ENCODE measurements at regions of chr17 and their contacts with region 1.

Region 1: DNA sequence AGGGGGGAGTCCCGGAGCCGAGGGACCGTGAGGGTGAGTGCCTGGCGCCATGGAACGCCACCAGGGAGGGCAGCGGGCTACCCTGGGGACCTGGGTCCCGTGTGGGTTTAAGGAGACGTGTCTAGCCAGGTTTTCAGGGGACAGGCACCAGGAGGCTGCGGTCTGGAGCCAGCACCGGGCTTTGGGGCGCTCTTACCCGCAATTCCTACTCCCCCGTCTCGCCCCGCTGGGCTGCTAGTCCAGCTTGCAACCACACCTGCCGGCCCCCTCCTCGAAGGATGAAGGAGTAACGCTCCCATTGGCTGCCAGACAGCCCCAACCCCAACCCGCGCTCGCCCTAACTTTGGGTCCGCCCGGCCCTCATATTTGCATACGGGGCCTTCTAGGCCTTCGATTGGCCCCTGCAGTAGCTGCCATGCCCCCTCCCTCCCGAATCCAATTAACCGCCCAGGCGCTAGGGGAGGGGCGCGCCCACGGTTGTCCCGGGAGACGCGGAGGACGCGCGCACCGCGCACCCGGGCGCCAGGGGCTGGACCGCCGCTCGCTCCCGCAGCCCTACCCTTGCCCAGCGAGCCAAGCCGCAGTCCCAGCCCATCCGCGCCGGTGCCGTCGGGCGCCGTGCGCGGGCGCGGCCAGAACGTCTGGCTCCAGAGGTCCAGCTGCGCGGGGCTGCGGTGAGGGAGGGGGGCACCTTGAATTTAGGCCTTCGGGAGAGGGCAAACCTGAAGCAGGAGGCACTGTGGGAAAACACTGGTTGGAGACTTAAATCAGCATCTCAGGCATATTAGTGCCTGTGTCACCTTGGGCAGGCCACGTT is at the start of gene TTLL6:
- DNase-seq: peak; percentile 67 to 85 (median 75)
- H3K4me3 ChIP-seq: peak within 1 kb of the TSS; percentile 69
- H3K4me3 Mint-ChIP-seq: peak within 1 kb of the TSS; percentile 29 to 89 (median 76)
- H3K27ac ChIP-seq: no peak within 1 kb of the TSS
- H3K27ac Mint-ChIP-seq: peak within 1 kb of the TSS in 3 of 8 donors; percentile 63 to 90 (median 68)
- H3K4me1 ChIP-seq: peaks cover 13% of the 10 kb centered on the region
- H3K4me1 Mint-ChIP-seq: peaks cover 13 to 24% (median 14%) of the 10 kb centered on the region in 3 donors
- H3K27me3 ChIP-seq: peaks cover 20% of the 10 kb centered on the region
- H3K27me3 Mint-ChIP-seq: peaks cover 30 to 60% of the 10 kb centered on the region in 2 donors
- total RNA-seq, gene TTLL6: not detected

Region 2: GRCh38 chr17:48678141-48678971 is 138.6 kb before region 1 on chr17:
- CTCF ChIA-PET with region 1: interaction called, 20 read pairs
- POLR2A ChIA-PET with region 1: no interaction called
- DNase-seq: peak; percentile 55 to 70 (median 63)
- H3K4me3 ChIP-seq: no peak overlapping the region
- H3K4me3 Mint-ChIP-seq: peak overlapping the region in 4 of 7 donors; percentile 20 to 56 (median 46)
- H3K27ac ChIP-seq: no peak overlapping the region
- H3K27ac Mint-ChIP-seq: peak overlapping the region in 1 of 8 donors; percentile 10
- H3K4me1 ChIP-seq: peaks cover 3% of the 10 kb centered on the region
- H3K4me1 Mint-ChIP-seq: peaks cover 0 to 7% (median 0%) of the 10 kb centered on the region in 3 donors
- H3K27me3 ChIP-seq: peaks cover 9% of the 10 kb centered on the region
- H3K27me3 Mint-ChIP-seq: peaks cover 30 to 45% of the 10 kb centered on the region in 2 donors

Region 3: GRCh38 chr17:48729335-48730239 is 87.4 kb before region 1 on chr17:
- CTCF ChIA-PET with region 1: no interaction called
- POLR2A ChIA-PET with region 1: no interaction called
- DNase-seq: no peak
- H3K4me3 ChIP-seq: no peak overlapping the region
- H3K4me3 Mint-ChIP-seq: peak overlapping the region in 4 of 7 donors; percentile 1 to 45 (median 18)
- H3K27ac ChIP-seq: no peak overlapping the region
- H3K27ac Mint-ChIP-seq: peak overlapping the region in 1 of 8 donors; percentile 76
- H3K4me1 ChIP-seq: peaks cover 20% of the 10 kb centered on the region
- H3K4me1 Mint-ChIP-seq: peaks cover 36 to 54% (median 37%) of the 10 kb centered on the region in 3 donors
- H3K27me3 ChIP-seq: peaks cover 96% of the 10 kb centered on the region
- H3K27me3 Mint-ChIP-seq: peaks cover 86 to 94% of the 10 kb centered on the region in 2 donors

Region 4: GRCh38 chr17:48791128-48792032 is 25.6 kb before region 1 on chr17:
- CTCF ChIA-PET with region 1: no interaction called
- POLR2A ChIA-PET with region 1: no interaction called
- DNase-seq: peak in 1 of 5 donors; percentile 17
- H3K4me3 ChIP-seq: no peak overlapping the region
- H3K4me3 Mint-ChIP-seq: no peak overlapping the region
- H3K27ac ChIP-seq: no peak overlapping the region
- H3K27ac Mint-ChIP-seq: no peak overlapping the region
- H3K4me1 ChIP-seq: no peaks in the 10 kb centered on the region
- H3K4me1 Mint-ChIP-seq: peaks cover 0 to 7% (median 0%) of the 10 kb centered on the region in 3 donors
- H3K27me3 ChIP-seq: peaks cover 3% of the 10 kb centered on the region
- H3K27me3 Mint-ChIP-seq: peaks cover 22 to 61% of the 10 kb centered on the region in 2 donors

Region 5: GRCh38 chr17:48804925-48805411 is 12.0 kb before region 1 on chr17:
- CTCF ChIA-PET with region 1: interaction called, 21 read pairs
- POLR2A ChIA-PET with region 1: no interaction called
- DNase-seq: peak; percentile 45 to 67 (median 57)
- H3K4me3 ChIP-seq: no peak overlapping the region
- H3K4me3 Mint-ChIP-seq: peak overlapping the region in 1 of 7 donors; percentile 55
- H3K27ac ChIP-seq: no peak overlapping the region
- H3K27ac Mint-ChIP-seq: no peak overlapping the region
- H3K4me1 ChIP-seq: no peaks in the 10 kb centered on the region
- H3K4me1 Mint-ChIP-seq: peaks cover 0 to 2% (median 0%) of the 10 kb centered on the region in 3 donors
- H3K27me3 ChIP-seq: peaks cover 5% of the 10 kb centered on the region
- H3K27me3 Mint-ChIP-seq: peaks cover 6 to 14% of the 10 kb centered on the region in 2 donors

Region 6: GRCh38 chr17:48830840-48831548 is 14.0 kb after region 1 on chr17 and contains the start of gene CALCOCO2:
- CTCF ChIA-PET with region 1: interaction called, 13 read pairs
- POLR2A ChIA-PET with region 1: no interaction called
- DNase-seq: peak; percentile 79 to 87 (median 83)
- H3K4me3 ChIP-seq: peak within 1 kb of the TSS; percentile 88
- H3K4me3 Mint-ChIP-seq: peak within 1 kb of the TSS; percentile 95 to 98 (median 97)
- H3K27ac ChIP-seq: peak within 1 kb of the TSS; percentile 89
- H3K27ac Mint-ChIP-seq: peak within 1 kb of the TSS; percentile 89 to 99 (median 98)
- H3K4me1 ChIP-seq: peaks cover 44% of the 10 kb centered on the region
- H3K4me1 Mint-ChIP-seq: peaks cover 29 to 60% (median 52%) of the 10 kb centered on the region in 3 donors
- H3K27me3 ChIP-seq: no peaks in the 10 kb centered on the region
- H3K27me3 Mint-ChIP-seq: peaks cover 1 to 10% of the 10 kb centered on the region in 2 donors
- total RNA-seq, gene CALCOCO2: 57.4 to 61.8 TPM